Naive thymus-derived CD4-positive, alpha-beta T cell (primary cell): ENCODE measurements at regions of chr6 and their contacts with region 1.

Region 1: DNA sequence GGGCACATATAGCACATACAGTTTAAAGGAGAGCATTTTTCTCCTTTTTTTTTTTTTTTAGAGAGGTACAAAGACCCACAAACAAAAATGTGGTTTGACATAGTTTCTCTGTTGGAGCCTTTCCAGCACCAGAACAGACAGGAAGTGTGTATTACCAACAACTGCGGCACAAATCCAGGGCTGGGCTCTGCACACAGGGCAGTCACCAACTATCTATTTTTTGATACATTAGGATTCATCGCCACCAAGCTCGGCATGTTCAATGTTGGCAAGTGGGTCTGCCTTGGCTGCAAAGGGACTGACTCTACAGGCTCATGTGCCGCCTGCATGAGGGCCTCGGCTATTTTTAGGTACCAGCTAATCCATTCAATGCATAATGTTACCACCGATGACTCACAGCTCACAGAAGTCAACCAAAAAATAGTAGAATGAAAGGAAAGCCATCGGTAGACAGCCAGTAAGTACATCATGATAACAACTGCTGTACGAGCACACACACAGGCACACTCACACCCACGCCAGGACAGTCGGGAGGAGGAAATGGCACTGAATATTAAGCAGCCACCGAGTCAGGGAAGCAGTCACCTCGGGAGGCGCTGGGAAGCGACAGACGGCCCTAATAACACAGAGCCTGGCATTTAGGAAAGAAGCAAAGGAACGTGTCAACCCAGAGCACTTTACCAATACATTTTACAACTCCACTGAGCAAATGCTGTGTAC is 81.6 kb downstream of the GMPR start:
- DNase-seq: peak; percentile 33 to 91 (median 79)
- ATAC-seq: peak; percentile 70
- H3K4me3 ChIP-seq: peak overlapping the region; percentile 43
- H3K4me3 Mint-ChIP-seq: peak overlapping the region; percentile 67 to 86 (median 78)
- H3K27ac ChIP-seq: peak overlapping the region; percentile 84
- H3K27ac Mint-ChIP-seq: peak overlapping the region; percentile 91 to 97 (median 95)
- H3K4me1 ChIP-seq: peaks cover 58 to 72% of the 10 kb centered on the region in 2 donors
- H3K4me1 Mint-ChIP-seq: peaks cover 41 to 78% (median 74%) of the 10 kb centered on the region in 7 donors
- H3K27me3 ChIP-seq: no peaks in the 10 kb centered on the region
- H3K27me3 Mint-ChIP-seq: no peaks in the 10 kb centered on the region

Region 2: DNA sequence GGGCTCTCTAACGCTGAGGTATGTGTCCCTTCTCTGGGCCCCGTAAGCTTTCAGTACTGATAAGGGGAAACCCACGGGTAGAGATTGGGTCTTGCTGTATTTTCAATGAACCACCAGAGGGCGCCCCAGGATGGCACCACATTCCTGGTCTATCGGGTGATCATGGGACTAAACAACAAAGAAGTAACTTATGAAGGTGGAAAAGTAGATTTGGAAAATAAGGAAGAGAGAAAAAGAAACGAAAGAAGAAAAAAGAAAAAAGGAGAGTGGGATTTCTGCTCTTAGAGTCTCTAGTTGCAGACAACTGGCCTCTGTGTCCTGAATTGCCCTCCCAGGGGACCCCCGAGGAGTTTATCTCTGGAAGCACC is 12.2 kb after region 1 on chr6:
- CTCF ChIA-PET with region 1: interaction called, 35 read pairs
- POLR2A ChIA-PET with region 1: interaction called, 6 read pairs
- intact Hi-C with region 1: loop called (anchors 1 kb)
- DNase-seq: peak; percentile 51 to 80 (median 73)
- ATAC-seq: peak; percentile 96
- H3K4me3 ChIP-seq: peak overlapping the region; percentile 19
- H3K4me3 Mint-ChIP-seq: no peak overlapping the region
- H3K27ac ChIP-seq: peak overlapping the region; percentile 32
- H3K27ac Mint-ChIP-seq: no peak overlapping the region
- H3K4me1 ChIP-seq: peaks cover 12 to 13% of the 10 kb centered on the region in 2 donors
- H3K4me1 Mint-ChIP-seq: peaks cover 0 to 6% (median 0%) of the 10 kb centered on the region in 7 donors
- H3K27me3 ChIP-seq: no peaks in the 10 kb centered on the region
- H3K27me3 Mint-ChIP-seq: no peaks in the 10 kb centered on the region

Region 3: GRCh38 chr6:16420715-16421461 is 100.9 kb after region 1 on chr6:
- CTCF ChIA-PET with region 1: no interaction called
- POLR2A ChIA-PET with region 1: interaction called, 3 read pairs
- intact Hi-C with region 1: loop called in 1 of 2 experiments (anchors 2 kb)
- DNase-seq: peak in 7 of 9 donors; percentile 22 to 52 (median 34)
- ATAC-seq: peak; percentile 80
- H3K4me3 ChIP-seq: peak overlapping the region; percentile 31
- H3K4me3 Mint-ChIP-seq: peak overlapping the region in 9 of 10 donors; percentile 59 to 84 (median 69)
- H3K27ac ChIP-seq: peak overlapping the region; percentile 70
- H3K27ac Mint-ChIP-seq: peak overlapping the region; percentile 72 to 99 (median 92)
- H3K4me1 ChIP-seq: peaks cover 16 to 31% of the 10 kb centered on the region in 2 donors
- H3K4me1 Mint-ChIP-seq: peaks cover 16 to 60% (median 37%) of the 10 kb centered on the region in 7 donors
- H3K27me3 ChIP-seq: no peaks in the 10 kb centered on the region
- H3K27me3 Mint-ChIP-seq: no peaks in the 10 kb centered on the region

Region 4: GRCh38 chr6:16704401-16705045 is 384.6 kb after region 1 on chr6:
- CTCF ChIA-PET with region 1: no interaction called
- POLR2A ChIA-PET with region 1: no interaction called
- intact Hi-C with region 1: loop called in 1 of 2 experiments (anchors 5 kb)
- DNase-seq: peak in 1 of 9 donors; percentile 58
- ATAC-seq: peak; percentile 49
- H3K4me3 ChIP-seq: peak overlapping the region; percentile 21
- H3K4me3 Mint-ChIP-seq: peak overlapping the region; percentile 19 to 82 (median 58)
- H3K27ac ChIP-seq: no peak overlapping the region
- H3K27ac Mint-ChIP-seq: peak overlapping the region in 3 of 9 donors; percentile 12 to 81 (median 65)
- H3K4me1 ChIP-seq: peaks cover 10 to 48% of the 10 kb centered on the region in 2 donors
- H3K4me1 Mint-ChIP-seq: peaks cover 47 to 64% (median 57%) of the 10 kb centered on the region in 7 donors
- H3K27me3 ChIP-seq: no peaks in the 10 kb centered on the region
- H3K27me3 Mint-ChIP-seq: no peaks in the 10 kb centered on the region

Region 5: DNA sequence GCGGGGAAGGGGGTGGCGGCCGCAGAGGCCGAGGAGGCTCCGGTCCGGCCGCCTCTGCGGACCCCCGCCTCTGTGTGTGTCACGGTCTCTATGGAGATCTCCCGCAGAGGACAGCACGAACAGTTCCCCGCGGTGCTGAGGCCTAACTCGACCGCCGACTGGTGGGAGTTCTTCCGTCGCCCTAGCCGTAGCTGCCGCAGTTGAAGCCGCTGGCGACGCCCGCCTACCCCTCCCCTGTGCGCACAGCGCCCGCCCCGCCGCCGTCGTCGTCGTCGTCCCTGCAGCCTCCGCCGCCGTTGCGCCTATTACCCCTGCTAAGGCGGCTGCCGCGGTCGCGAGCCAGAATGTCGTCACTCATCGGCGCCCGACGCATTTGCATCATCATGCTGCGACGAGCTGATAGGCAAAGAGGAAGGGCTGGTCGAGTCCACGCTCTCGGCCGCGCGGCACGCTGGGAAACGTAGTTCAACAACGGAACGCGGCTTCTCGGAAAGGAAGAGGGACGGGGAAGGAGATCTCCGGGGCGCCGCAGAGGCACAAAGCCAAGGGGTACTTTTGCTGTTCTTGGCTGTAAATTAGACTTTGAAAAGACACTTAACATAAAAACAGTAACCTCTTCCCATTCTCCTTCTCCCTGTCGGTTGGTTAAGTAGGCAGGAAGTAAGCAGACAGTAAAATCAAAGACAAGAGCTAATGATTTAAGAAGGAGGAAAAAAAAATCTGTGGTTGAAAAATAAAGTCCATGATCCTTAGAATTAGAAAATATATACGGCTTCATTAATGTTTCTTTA is 1386.8 kb after region 1 on chr6 and contains the start of gene NUP153:
- CTCF ChIA-PET with region 1: no interaction called
- POLR2A ChIA-PET with region 1: no interaction called
- intact Hi-C with region 1: loop called (anchors 2 to 5 kb)
- DNase-seq: peak; percentile 98 to 100 (median 99)
- ATAC-seq: peak; percentile 85
- H3K4me3 ChIP-seq: peak within 1 kb of the TSS; percentile 94
- H3K4me3 Mint-ChIP-seq: peak within 1 kb of the TSS; percentile 86 to 97 (median 94)
- H3K27ac ChIP-seq: peak within 1 kb of the TSS; percentile 100
- H3K27ac Mint-ChIP-seq: peak within 1 kb of the TSS; percentile 92 to 98 (median 95)
- H3K4me1 ChIP-seq: peaks cover 24 to 28% of the 10 kb centered on the region in 2 donors
- H3K4me1 Mint-ChIP-seq: peaks cover 13 to 53% (median 37%) of the 10 kb centered on the region in 7 donors
- H3K27me3 ChIP-seq: no peaks in the 10 kb centered on the region
- H3K27me3 Mint-ChIP-seq: peaks cover 0 to 2% (median 0%) of the 10 kb centered on the region in 5 donors
- total RNA-seq, gene NUP153: 47.7 to 90.9 (median 53.0) TPM

Region 6: GRCh38 chr6:18264219-18264922 is 1944.4 kb after region 1 on chr6 and contains the start of gene DEK:
- CTCF ChIA-PET with region 1: no interaction called
- POLR2A ChIA-PET with region 1: interaction called, 3 read pairs
- intact Hi-C with region 1: loop called (anchors 5 kb)
- DNase-seq: peak; percentile 64 to 85 (median 78)
- ATAC-seq: peak; percentile 84
- H3K4me3 ChIP-seq: peak within 1 kb of the TSS; percentile 71
- H3K4me3 Mint-ChIP-seq: peak within 1 kb of the TSS; percentile 90 to 99 (median 94)
- H3K27ac ChIP-seq: peak within 1 kb of the TSS; percentile 83
- H3K27ac Mint-ChIP-seq: peak within 1 kb of the TSS; percentile 91 to 98 (median 96)
- H3K4me1 ChIP-seq: peaks cover 26 to 33% of the 10 kb centered on the region in 2 donors
- H3K4me1 Mint-ChIP-seq: peaks cover 39 to 55% (median 51%) of the 10 kb centered on the region in 7 donors
- H3K27me3 ChIP-seq: no peaks in the 10 kb centered on the region
- H3K27me3 Mint-ChIP-seq: no peaks in the 10 kb centered on the region
- total RNA-seq, gene DEK: 49.6 to 174 (median 101) TPM